Esophagus squamous epithelium (tissue), 5 donors: ENCODE measurements at regions of chr10 and their contacts with region 1.

Region 1: GRCh38 chr10:100518761-100519241 is 860 bp downstream of the SEC31B start:
- DNase-seq: no peak
- H3K4me3 ChIP-seq: peak overlapping the region; percentile 14 to 64 (median 46)
- H3K27ac ChIP-seq: no peak overlapping the region
- H3K4me1 ChIP-seq: peaks cover 6 to 16% (median 10%) of the 10 kb centered on the region in 3 donors
- H3K27me3 ChIP-seq: peaks cover 0 to 12% (median 0%) of the 10 kb centered on the region in 4 donors
- CTCF ChIP-seq: peak; percentile 36 to 75 (median 66)
- POLR2A ChIP-seq: no peak

Region 2: GRCh38 chr10:100338434-100339036 is 180.3 kb before region 1 on chr10:
- intact Hi-C with region 1: loop called (anchors 5 kb)
- DNase-seq: no peak
- H3K4me3 ChIP-seq: no peak overlapping the region
- H3K27ac ChIP-seq: no peak overlapping the region
- H3K4me1 ChIP-seq: peaks cover 0 to 9% (median 0%) of the 10 kb centered on the region in 3 donors
- H3K27me3 ChIP-seq: peaks cover 0 to 16% (median 0%) of the 10 kb centered on the region in 4 donors
- CTCF ChIP-seq: peak; percentile 72 to 92 (median 90)
- POLR2A ChIP-seq: no peak

Region 3: GRCh38 chr10:100446130-100446761 is 72.6 kb before region 1 on chr10:
- intact Hi-C with region 1: no loop called
- DNase-seq: no peak
- H3K4me3 ChIP-seq: no peak overlapping the region
- H3K27ac ChIP-seq: no peak overlapping the region
- H3K4me1 ChIP-seq: no peaks in the 10 kb centered on the region
- H3K27me3 ChIP-seq: peaks cover 0 to 9% (median 0%) of the 10 kb centered on the region in 4 donors
- CTCF ChIP-seq: no peak
- POLR2A ChIP-seq: no peak

Region 4: GRCh38 chr10:100653957-100654781 is 135.4 kb after region 1 on chr10:
- intact Hi-C with region 1: no loop called
- DNase-seq: no peak
- H3K4me3 ChIP-seq: peak overlapping the region in 2 of 4 donors; percentile 32 to 56
- H3K27ac ChIP-seq: no peak overlapping the region
- H3K4me1 ChIP-seq: peaks cover 16 to 36% (median 27%) of the 10 kb centered on the region in 3 donors
- H3K27me3 ChIP-seq: peaks cover 16 to 94% (median 47%) of the 10 kb centered on the region in 4 donors
- CTCF ChIP-seq: no peak
- POLR2A ChIP-seq: no peak